IMR-90 (cell line): ENCODE measurements at regions of chr13 and their contacts with region 1.

Region 1: GRCh38 chr13:95191821-95192563 is 109.3 kb downstream of the ABCC4 start:
- DNase-seq: peak; percentile 74
- ATAC-seq: peak; percentile 91
- H3K4me3 ChIP-seq: no peak overlapping the region
- H3K27ac ChIP-seq: peak overlapping the region; percentile 60
- H3K4me1 ChIP-seq: peaks cover 25% of the 10 kb centered on the region; the same call in 1 of the 2 replicates
- H3K27me3 ChIP-seq: no peaks in the 10 kb centered on the region
- CTCF ChIP-seq: peak; percentile 91
- POLR2A ChIP-seq: no peak
- RAD21 ChIP-seq: peak; percentile 94

Region 2: GRCh38 chr13:95156208-95156607 is 35.8 kb before region 1 on chr13:
- CTCF ChIA-PET with region 1: interaction called, 14 read pairs
- POLR2A ChIA-PET with region 1: no interaction called
- dilution Hi-C with region 1: no loop called
- in situ Hi-C with region 1: no loop called
- intact Hi-C with region 1: no loop called
- DNase-seq: peak; percentile 17
- ATAC-seq: no peak
- H3K4me3 ChIP-seq: no peak overlapping the region
- H3K27ac ChIP-seq: no peak overlapping the region
- H3K4me1 ChIP-seq: peaks cover 8% of the 10 kb centered on the region
- H3K27me3 ChIP-seq: no peaks in the 10 kb centered on the region
- CTCF ChIP-seq: peak; percentile 40
- POLR2A ChIP-seq: no peak
- RAD21 ChIP-seq: peak; percentile 56

Region 3: DNA sequence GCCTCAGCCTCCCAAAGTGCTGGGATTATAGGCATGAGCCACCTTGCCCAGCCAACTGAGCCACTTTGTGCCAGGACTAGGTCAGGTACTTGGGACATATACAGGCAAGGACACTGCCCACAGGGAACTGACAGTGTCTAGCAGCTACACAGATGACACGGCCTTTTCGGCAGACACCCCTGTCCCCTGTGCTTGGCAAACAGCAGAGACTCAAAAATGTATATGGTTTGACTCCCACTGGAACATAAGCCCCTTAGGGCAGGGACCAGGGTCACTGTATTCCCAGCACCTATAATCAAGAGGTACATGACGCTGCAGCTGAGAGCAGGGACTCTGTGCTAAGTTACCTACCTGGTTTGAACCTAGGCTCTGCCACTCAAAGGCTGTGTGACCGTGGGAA is 92.4 kb after region 1 on chr13:
- CTCF ChIA-PET with region 1: no interaction called
- POLR2A ChIA-PET with region 1: no interaction called
- dilution Hi-C with region 1: no loop called
- in situ Hi-C with region 1: no loop called
- intact Hi-C with region 1: loop called (anchors 5 kb)
- DNase-seq: no peak
- ATAC-seq: no peak
- H3K4me3 ChIP-seq: no peak overlapping the region
- H3K27ac ChIP-seq: no peak overlapping the region; the same call in 1 of the 2 replicates
- H3K4me1 ChIP-seq: peaks cover 20% of the 10 kb centered on the region
- H3K27me3 ChIP-seq: no peaks in the 10 kb centered on the region
- CTCF ChIP-seq: no peak
- POLR2A ChIP-seq: no peak
- RAD21 ChIP-seq: no peak

Region 4: GRCh38 chr13:95378603-95379002 is 186.6 kb after region 1 on chr13:
- CTCF ChIA-PET with region 1: interaction called, 7 read pairs
- POLR2A ChIA-PET with region 1: no interaction called
- dilution Hi-C with region 1: no loop called
- in situ Hi-C with region 1: loop called (anchors 10 kb)
- intact Hi-C with region 1: loop called (anchors 1 kb)
- DNase-seq: no peak
- ATAC-seq: no peak
- H3K4me3 ChIP-seq: no peak overlapping the region
- H3K27ac ChIP-seq: no peak overlapping the region
- H3K4me1 ChIP-seq: peaks cover 3% of the 10 kb centered on the region; the same call in 1 of the 2 replicates
- H3K27me3 ChIP-seq: peaks cover 3% of the 10 kb centered on the region; the same call in 1 of the 2 replicates
- CTCF ChIP-seq: no peak
- POLR2A ChIP-seq: no peak
- RAD21 ChIP-seq: no peak

Region 5: GRCh38 chr13:95480131-95480545 is 288.1 kb after region 1 on chr13:
- CTCF ChIA-PET with region 1: no interaction called
- POLR2A ChIA-PET with region 1: no interaction called
- dilution Hi-C with region 1: no loop called
- in situ Hi-C with region 1: no loop called
- intact Hi-C with region 1: loop called (anchors 2 kb)
- DNase-seq: no peak
- ATAC-seq: no peak
- H3K4me3 ChIP-seq: no peak overlapping the region
- H3K27ac ChIP-seq: no peak overlapping the region
- H3K4me1 ChIP-seq: no peaks in the 10 kb centered on the region
- H3K27me3 ChIP-seq: peaks cover 21% of the 10 kb centered on the region
- CTCF ChIP-seq: no peak
- POLR2A ChIP-seq: no peak
- RAD21 ChIP-seq: no peak